ENCODE measurements at regions of chr9 and their contacts with region 1.

Region 1: DNA sequence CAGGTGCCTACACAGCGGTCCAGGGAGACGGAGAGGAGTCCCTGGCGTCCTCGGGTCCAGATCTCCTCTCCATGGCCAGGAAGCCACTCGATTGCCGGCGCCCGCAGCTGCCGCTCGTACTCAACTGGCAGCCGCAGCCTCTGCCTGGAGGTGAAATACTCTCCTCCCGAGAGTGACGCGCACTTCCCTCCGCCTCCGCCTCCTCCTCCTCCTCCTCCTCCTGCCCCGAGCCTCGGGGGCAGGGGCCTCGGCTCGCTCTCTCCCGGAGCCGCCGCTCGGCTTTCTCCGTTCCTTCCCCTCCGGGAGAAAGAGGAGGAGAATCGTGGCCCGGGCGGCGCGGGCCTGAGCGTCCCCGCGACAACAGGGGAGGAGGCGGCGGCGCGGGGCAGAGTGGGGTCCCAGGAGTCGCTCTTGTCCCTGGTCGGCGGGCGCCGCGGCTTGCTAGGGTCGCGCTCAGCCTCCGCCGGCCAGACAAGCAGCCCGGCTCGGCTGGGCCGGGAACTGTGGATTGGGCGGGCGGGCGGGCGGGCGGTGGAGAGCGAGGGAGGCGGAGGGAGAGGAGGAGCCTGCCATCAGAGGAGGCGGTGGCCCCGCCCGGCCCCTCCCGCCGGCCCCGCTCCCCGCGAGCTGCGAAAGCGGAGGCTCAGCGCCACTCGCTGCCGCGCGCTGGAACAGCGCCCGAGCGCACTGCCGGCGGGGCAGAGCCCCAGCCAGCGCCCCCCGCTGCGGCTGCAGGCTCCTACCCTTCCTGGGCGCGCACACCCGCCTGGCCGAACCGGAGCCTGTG is at the start of gene CEMIP2:
- DNase-seq: peak; percentile 91
- ATAC-seq: peak; percentile 76
- H3K4me3 Mint-ChIP-seq: peak within 1 kb of the TSS; percentile 100
- H3K27ac Mint-ChIP-seq: peak within 1 kb of the TSS; percentile 97
- H3K4me1 Mint-ChIP-seq: peaks cover 46% of the 10 kb centered on the region
- H3K27me3 Mint-ChIP-seq: no peaks in the 10 kb centered on the region; the same call in none of the 2 replicates
- CTCF ChIP-seq: no peak
- total RNA-seq, gene CEMIP2: 40.5 to 43.2 TPM (median 40.6 TPM) in 3 replicates

Region 2: DNA sequence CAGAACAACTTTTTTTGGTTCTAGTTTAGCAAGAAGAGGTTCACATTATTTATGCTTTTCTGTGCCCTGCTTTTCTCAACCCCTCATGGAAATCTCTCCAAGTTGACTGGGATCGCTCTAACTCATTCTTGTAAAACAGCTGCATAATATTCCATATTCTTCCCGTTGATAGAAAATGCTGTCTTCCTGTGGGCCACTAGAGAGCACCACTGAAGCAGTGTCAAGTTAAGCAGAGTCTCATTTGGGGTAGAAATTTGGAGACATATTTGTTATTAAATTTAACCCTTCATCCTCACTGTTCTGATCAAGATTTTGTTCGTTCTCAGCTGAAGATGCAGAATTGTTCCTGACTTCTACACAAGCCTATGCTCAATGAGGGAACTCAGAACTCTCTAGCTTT is 140.3 kb before region 1 on chr9:
- CTCF ChIA-PET with region 1: interaction called, 17 read pairs
- POLR2A ChIA-PET with region 1: no interaction called
- DNase-seq: no peak
- ATAC-seq: peak; percentile 57; the same call in 1 of the 2 replicates
- H3K4me3 Mint-ChIP-seq: no peak overlapping the region
- H3K27ac Mint-ChIP-seq: no peak overlapping the region
- H3K4me1 Mint-ChIP-seq: peaks cover 14% of the 10 kb centered on the region
- H3K27me3 Mint-ChIP-seq: no peaks in the 10 kb centered on the region
- CTCF ChIP-seq: no peak

Region 3: GRCh38 chr9:71683598-71684235 is 84.9 kb before region 1 on chr9:
- CTCF ChIA-PET with region 1: interaction called, 12 read pairs
- POLR2A ChIA-PET with region 1: no interaction called
- DNase-seq: peak; percentile 37
- ATAC-seq: peak; percentile 91
- H3K4me3 Mint-ChIP-seq: no peak overlapping the region
- H3K27ac Mint-ChIP-seq: peak overlapping the region; percentile 81; the same call in 1 of the 2 replicates
- H3K4me1 Mint-ChIP-seq: peaks cover 26% of the 10 kb centered on the region
- H3K27me3 Mint-ChIP-seq: no peaks in the 10 kb centered on the region
- CTCF ChIP-seq: no peak

Region 4: GRCh38 chr9:71806901-71807307 is 38.3 kb after region 1 on chr9:
- CTCF ChIA-PET with region 1: interaction called, 12 read pairs
- POLR2A ChIA-PET with region 1: no interaction called
- DNase-seq: peak; percentile 57
- ATAC-seq: peak; percentile 100
- H3K4me3 Mint-ChIP-seq: no peak overlapping the region
- H3K27ac Mint-ChIP-seq: peak overlapping the region; percentile 58
- H3K4me1 Mint-ChIP-seq: peaks cover 17% of the 10 kb centered on the region
- H3K27me3 Mint-ChIP-seq: no peaks in the 10 kb centered on the region
- CTCF ChIP-seq: 0 out of 2 replicates have a peak, but pooled peaks have one; percentile 43

Region 5: DNA sequence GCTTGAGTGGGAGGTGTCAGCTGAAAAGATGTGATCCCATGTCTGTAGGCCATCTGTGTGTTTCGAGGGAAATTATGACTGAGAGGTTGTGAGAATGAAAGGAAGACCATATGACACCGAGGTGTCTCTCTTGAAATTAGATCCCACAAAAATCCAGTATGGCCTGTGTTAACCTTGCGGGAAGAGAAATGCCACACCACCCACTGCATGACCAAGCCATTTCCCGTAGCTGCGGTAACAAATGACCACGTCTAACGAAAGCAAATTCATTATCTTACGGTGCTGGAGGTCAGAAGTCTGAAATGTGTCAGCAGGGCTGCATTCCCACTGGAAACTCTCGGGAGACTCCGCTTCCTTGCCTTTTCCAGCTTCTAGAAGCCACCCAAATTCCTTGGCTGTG is 280.3 kb after region 1 on chr9:
- CTCF ChIA-PET with region 1: no interaction called
- POLR2A ChIA-PET with region 1: no interaction called
- DNase-seq: no peak
- ATAC-seq: no peak
- H3K4me3 Mint-ChIP-seq: no peak overlapping the region
- H3K27ac Mint-ChIP-seq: no peak overlapping the region
- H3K4me1 Mint-ChIP-seq: no peaks in the 10 kb centered on the region
- H3K27me3 Mint-ChIP-seq: no peaks in the 10 kb centered on the region; the same call in 1 of the 2 replicates
- CTCF ChIP-seq: no peak

Measured in WTC11 (cell line).